ENCODE measurements at regions of chr1 and their contacts with region 1.

Region 1: DNA sequence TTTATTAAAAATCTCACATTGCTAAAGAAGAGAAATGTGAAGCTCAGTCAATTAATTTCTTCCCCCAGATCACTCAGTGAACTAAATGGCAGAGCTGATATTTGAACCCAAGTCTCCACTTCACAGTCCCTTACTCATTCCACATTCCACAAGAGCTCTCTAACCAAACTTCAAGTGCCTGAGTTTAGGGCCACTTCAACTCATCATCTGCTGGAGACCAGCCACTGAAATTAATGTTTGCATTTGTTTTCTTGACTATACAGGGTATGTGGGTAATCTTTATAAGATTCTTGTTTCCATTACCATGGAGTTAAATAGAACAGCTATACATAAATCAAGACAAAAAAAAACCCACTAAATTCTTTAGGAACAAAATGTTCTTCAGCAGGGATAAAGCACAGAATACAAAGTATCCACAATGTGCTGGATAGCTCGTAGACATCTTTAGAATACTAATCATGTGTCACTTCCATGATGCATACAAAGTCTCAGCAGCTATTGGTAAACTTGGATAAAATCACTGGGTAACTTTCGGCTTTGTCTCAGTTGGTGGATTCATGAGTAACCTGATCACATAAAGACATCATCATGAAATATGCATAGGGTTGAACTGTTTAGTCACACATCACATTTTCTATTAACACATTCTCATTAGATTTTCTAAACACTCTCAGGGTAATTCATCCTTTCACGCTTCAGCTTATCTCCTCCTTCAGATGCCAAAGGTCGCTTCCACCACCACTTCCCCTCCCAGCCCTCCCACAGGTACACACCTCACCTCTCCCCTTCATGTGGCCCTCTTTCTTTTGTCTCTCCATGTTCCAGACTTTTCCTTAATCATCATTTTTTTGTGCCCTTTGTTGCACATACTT is 89.8 kb downstream of the LRRC53 start:
- DNase-seq: no peak
- ATAC-seq: peak in 1 of 8 donors; percentile 53
- H3K4me3 ChIP-seq: no peak overlapping the region
- H3K27ac ChIP-seq: peak overlapping the region in 4 of 10 donors; percentile 15 to 68 (median 28)
- H3K4me1 ChIP-seq: peaks cover 0 to 39% (median 14%) of the 10 kb centered on the region in 9 donors
- H3K27me3 ChIP-seq: no peaks in the 10 kb centered on the region
- CTCF ChIP-seq: no peak

Region 2: GRCh38 chr1:74363220-74363619 is 59.4 kb before region 1 on chr1:
- intact Hi-C with region 1: loop called in 1 of 10 experiments (anchors 5 kb)
- DNase-seq: peak; percentile 32 to 75
- ATAC-seq: peak; percentile 80 to 99 (median 94)
- H3K4me3 ChIP-seq: no peak overlapping the region
- H3K27ac ChIP-seq: peak overlapping the region; percentile 15 to 85 (median 72)
- H3K4me1 ChIP-seq: peaks cover 0 to 14% (median 0%) of the 10 kb centered on the region in 9 donors
- H3K27me3 ChIP-seq: no peaks in the 10 kb centered on the region
- CTCF ChIP-seq: no peak

Region 3: GRCh38 chr1:74388855-74389254 is 33.8 kb before region 1 on chr1:
- intact Hi-C with region 1: loop called in 1 of 10 experiments (anchors 5 kb)
- DNase-seq: no peak
- ATAC-seq: peak in 7 of 8 donors; percentile 18 to 80 (median 43)
- H3K4me3 ChIP-seq: no peak overlapping the region
- H3K27ac ChIP-seq: peak overlapping the region in 4 of 10 donors; percentile 6 to 16 (median 11)
- H3K4me1 ChIP-seq: peaks cover 0 to 21% (median 10%) of the 10 kb centered on the region in 9 donors
- H3K27me3 ChIP-seq: no peaks in the 10 kb centered on the region
- CTCF ChIP-seq: no peak

Region 4: GRCh38 chr1:74470936-74471335 is 48.3 kb after region 1 on chr1:
- intact Hi-C with region 1: no loop called
- DNase-seq: no peak
- ATAC-seq: peak in 7 of 8 donors; percentile 18 to 52 (median 43)
- H3K4me3 ChIP-seq: no peak overlapping the region
- H3K27ac ChIP-seq: peak overlapping the region in 9 of 10 donors; percentile 45 to 79 (median 67)
- H3K4me1 ChIP-seq: peaks cover 0 to 49% (median 24%) of the 10 kb centered on the region in 9 donors
- H3K27me3 ChIP-seq: no peaks in the 10 kb centered on the region
- CTCF ChIP-seq: no peak